ENCODE measurements at regions of chr11 and their contacts with region 1.

Region 1: GRCh38 chr11:10792398-10792975 is 16.2 kb downstream of the EIF4G2 start:
- DNase-seq: peak; percentile 69
- H3K4me3 ChIP-seq: no peak overlapping the region
- H3K27ac ChIP-seq: no peak overlapping the region
- H3K4me1 ChIP-seq: no peaks in the 10 kb centered on the region
- H3K27me3 ChIP-seq: no peaks in the 10 kb centered on the region
- CTCF ChIP-seq: peak; percentile 97 to 98
- POLR2A ChIP-seq: no peak

Region 2: GRCh38 chr11:10808553-10809372 is 16.3 kb after region 1 on chr11 and contains the start of gene EIF4G2:
- CTCF ChIA-PET with region 1: interaction called, 17 read pairs
- POLR2A ChIA-PET with region 1: interaction called, 47 read pairs
- dilution Hi-C with region 1: no loop called
- intact Hi-C with region 1: no loop called
- DNase-seq: peak; percentile 99
- H3K4me3 ChIP-seq: peak within 1 kb of the TSS; percentile 88 to 97 (median 97)
- H3K27ac ChIP-seq: peak within 1 kb of the TSS; percentile 97
- H3K4me1 ChIP-seq: peaks cover 39% of the 10 kb centered on the region
- H3K27me3 ChIP-seq: no peaks in the 10 kb centered on the region
- CTCF ChIP-seq: no peak
- POLR2A ChIP-seq: peak; percentile 100
- total RNA-seq, gene EIF4G2: 1,175 and 1,194 TPM in 2 replicates

Region 3: GRCh38 chr11:10906513-10906912 is 114.0 kb after region 1 on chr11:
- CTCF ChIA-PET with region 1: interaction called, 23 read pairs
- POLR2A ChIA-PET with region 1: no interaction called
- dilution Hi-C with region 1: no loop called
- intact Hi-C with region 1: no loop called
- DNase-seq: peak; percentile 21
- H3K4me3 ChIP-seq: no peak overlapping the region
- H3K27ac ChIP-seq: no peak overlapping the region
- H3K4me1 ChIP-seq: peaks cover 10% of the 10 kb centered on the region
- H3K27me3 ChIP-seq: no peaks in the 10 kb centered on the region
- CTCF ChIP-seq: no peak
- POLR2A ChIP-seq: no peak

Region 4: DNA sequence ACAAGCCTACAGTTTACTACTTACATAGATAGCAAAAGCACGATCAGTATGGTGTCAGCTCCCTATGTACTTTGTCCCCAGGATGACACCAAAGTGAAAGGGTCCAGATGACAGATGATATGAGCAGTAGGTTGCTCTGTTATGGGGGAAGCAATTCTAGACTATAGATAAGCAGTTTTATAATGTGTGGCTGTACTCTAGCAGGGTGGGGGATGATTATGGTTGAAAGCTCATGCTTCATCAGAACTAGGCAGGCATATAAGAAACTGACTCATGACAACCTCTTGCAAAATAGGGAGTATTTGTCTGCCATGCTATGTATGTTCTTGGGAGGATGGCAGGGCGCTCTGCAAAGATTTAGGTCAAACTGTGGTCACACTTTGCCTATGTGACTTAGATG is 223.6 kb after region 1 on chr11:
- CTCF ChIA-PET with region 1: interaction called, 83 read pairs
- POLR2A ChIA-PET with region 1: interaction called, 4 read pairs
- dilution Hi-C with region 1: no loop called
- intact Hi-C with region 1: no loop called
- DNase-seq: no peak
- H3K4me3 ChIP-seq: no peak overlapping the region
- H3K27ac ChIP-seq: no peak overlapping the region
- H3K4me1 ChIP-seq: no peaks in the 10 kb centered on the region
- H3K27me3 ChIP-seq: peaks cover 10 to 24% of the 10 kb centered on the region in 2 experiments
- CTCF ChIP-seq: no peak
- POLR2A ChIP-seq: no peak

Region 5: GRCh38 chr11:11157185-11157584 is 364.7 kb after region 1 on chr11:
- CTCF ChIA-PET with region 1: interaction called, 10 read pairs
- POLR2A ChIA-PET with region 1: no interaction called
- dilution Hi-C with region 1: no loop called
- intact Hi-C with region 1: no loop called
- DNase-seq: peak; percentile 6
- H3K4me3 ChIP-seq: no peak overlapping the region
- H3K27ac ChIP-seq: no peak overlapping the region
- H3K4me1 ChIP-seq: no peaks in the 10 kb centered on the region
- H3K27me3 ChIP-seq: no peaks in the 10 kb centered on the region
- CTCF ChIP-seq: peak in 1 of 2 donors; percentile 54
- POLR2A ChIP-seq: no peak